Motor neuron (in vitro differentiated cells): ENCODE measurements at regions of chr2 and their contacts with region 1.

Region 1: DNA sequence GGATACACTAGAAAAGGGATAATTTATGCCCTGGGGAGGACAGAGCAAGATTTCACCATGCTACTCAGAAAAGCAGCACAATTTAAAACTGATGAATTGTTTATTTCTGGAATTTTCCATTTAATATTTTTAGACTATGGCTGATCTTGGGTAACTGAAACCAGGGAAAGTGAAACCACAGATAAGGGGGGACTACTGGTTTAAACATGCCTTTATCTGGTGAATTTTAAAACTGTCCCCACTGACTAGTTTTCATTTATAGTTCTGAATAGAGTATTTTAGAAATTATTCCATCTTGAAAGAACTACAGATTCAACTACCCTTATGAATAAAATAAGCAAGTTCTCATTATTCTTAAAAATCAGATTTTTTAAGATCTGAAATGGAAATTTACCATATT is 15.0 kb downstream of the NFU1 start:
- ATAC-seq: no peak
- H3K4me3 ChIP-seq: no peak overlapping the region
- H3K27ac ChIP-seq: no peak overlapping the region
- H3K4me1 ChIP-seq: no peaks in the 10 kb centered on the region

Region 2: DNA sequence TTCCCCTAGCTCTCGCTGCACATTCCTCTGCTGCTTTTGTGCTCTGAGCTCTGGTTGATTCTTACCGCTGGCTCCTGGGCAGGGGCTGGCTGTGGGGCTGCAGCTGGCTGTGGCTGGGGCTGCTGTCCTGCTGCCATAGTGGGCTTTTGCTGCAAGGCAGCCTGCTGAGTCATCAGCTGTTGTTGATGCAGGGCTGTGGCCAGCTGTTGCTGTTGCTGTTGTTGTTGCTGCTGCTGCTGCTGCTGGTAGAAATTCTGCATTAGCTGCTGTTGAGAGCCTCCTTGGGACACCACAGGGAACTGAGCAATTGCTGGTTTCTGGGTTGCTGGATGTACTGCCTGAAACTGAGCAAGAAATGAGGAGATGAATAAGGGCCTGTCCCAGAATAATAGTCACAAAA is 92.2 kb after region 1 on chr2:
- in situ Hi-C with region 1: loop called in 1 of 9 experiments (anchors 25 kb)
- ATAC-seq: peak in 7 of 8 experiments; percentile 45 to 96 (median 94)
- H3K4me3 ChIP-seq: no peak overlapping the region
- H3K27ac ChIP-seq: peak overlapping the region in 1 of 2 donors; percentile 57
- H3K4me1 ChIP-seq: peaks cover 0 to 13% of the 10 kb centered on the region in 2 donors